ENCODE measurements at regions of chr4 and their contacts with region 1.

Region 1: DNA sequence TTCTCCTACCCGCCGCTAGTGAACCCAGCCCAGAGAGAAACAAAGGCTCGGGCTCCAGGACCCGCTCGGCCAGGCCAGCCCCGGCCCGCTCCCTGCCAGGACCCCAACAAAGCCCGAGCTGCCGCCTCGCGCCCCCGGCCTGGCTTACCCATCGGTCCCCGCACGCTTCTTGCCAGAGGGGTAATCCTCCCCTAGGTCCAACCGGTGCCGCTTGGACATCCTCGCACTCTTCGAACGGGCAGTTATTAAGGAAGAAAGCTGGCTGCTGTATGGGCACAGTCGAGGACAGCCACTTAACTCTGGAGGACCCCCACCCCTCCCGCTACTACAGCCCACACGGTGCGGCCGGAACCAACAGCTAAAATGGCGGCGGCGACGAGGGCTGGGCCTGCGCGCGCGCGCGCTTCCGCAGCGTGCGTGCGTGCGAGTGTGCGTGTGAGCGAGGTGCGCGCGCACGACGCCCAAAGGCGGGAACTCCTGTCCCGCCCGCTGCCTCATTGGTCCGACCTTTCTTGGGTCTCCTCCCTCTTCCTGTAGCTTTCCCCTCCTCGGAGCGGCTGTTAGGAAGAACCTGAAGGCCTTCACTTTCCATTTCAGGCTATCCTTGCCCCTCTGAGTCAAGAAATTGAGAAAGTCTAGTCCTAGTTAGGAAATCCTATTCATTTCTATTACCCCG is at the start of gene DHX15:
- DNase-seq: peak; percentile 98
- H3K4me3 ChIP-seq: peak within 1 kb of the TSS; percentile 100
- H3K27ac ChIP-seq: peak within 1 kb of the TSS; percentile 79
- H3K4me1 ChIP-seq: peaks cover 49% of the 10 kb centered on the region
- CTCF ChIP-seq: no peak
- total RNA-seq, gene DHX15: 189 and 206 TPM in 2 replicates

Region 2: GRCh38 chr4:24574236-24574635 is 10.1 kb before region 1 on chr4:
- CTCF ChIA-PET with region 1: interaction called, 3 read pairs
- POLR2A ChIA-PET with region 1: interaction called, 16 read pairs
- intact Hi-C with region 1: no loop called
- DNase-seq: no peak
- H3K4me3 ChIP-seq: no peak overlapping the region
- H3K27ac ChIP-seq: no peak overlapping the region
- H3K4me1 ChIP-seq: peaks cover 22% of the 10 kb centered on the region
- CTCF ChIP-seq: no peak

Region 3: GRCh38 chr4:24753500-24753899 is 169.2 kb after region 1 on chr4:
- CTCF ChIA-PET with region 1: no interaction called
- POLR2A ChIA-PET with region 1: no interaction called
- intact Hi-C with region 1: no loop called
- DNase-seq: no peak
- H3K4me3 ChIP-seq: no peak overlapping the region
- H3K27ac ChIP-seq: no peak overlapping the region
- H3K4me1 ChIP-seq: no peaks in the 10 kb centered on the region
- CTCF ChIP-seq: no peak

Region 4: GRCh38 chr4:25376754-25377571 is 792.6 kb after region 1 on chr4 and contains the start of gene ANAPC4:
- CTCF ChIA-PET with region 1: no interaction called
- POLR2A ChIA-PET with region 1: interaction called, 4 read pairs
- intact Hi-C with region 1: loop called (anchors 5 kb)
- DNase-seq: peak; percentile 96
- H3K4me3 ChIP-seq: peak within 1 kb of the TSS; percentile 100
- H3K27ac ChIP-seq: peak within 1 kb of the TSS; percentile 54
- H3K4me1 ChIP-seq: peaks cover 24% of the 10 kb centered on the region
- CTCF ChIP-seq: no peak
- total RNA-seq, gene ANAPC4: 32.7 and 36.1 TPM in 2 replicates